CD4-positive, alpha-beta T cell (primary cell): ENCODE measurements at regions of chr17 and their contacts with region 1.

Region 1: DNA sequence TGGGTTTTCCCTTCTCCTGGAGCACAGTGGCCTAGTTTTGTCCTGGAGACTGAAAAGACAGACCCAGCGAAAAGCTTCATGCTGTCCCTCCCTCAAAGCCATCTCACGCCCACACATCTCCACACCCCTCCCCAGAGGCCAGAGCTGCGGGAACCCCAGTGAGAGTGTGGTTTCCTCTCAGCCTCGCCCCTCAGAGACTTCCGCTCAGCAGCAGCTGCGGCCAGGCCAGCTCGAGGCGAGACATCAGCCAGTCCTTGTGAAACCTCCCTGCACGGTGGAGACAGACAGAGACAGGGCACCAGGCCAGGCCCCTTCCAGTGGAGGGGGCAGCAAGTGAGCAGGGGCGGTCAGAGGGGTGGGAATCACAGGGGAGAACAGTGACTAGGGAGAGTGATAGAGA is 77.0 kb upstream of the TNRC6C start:
- DNase-seq: peak; percentile 44 to 91 (median 66)
- ATAC-seq: peak; percentile 14
- H3K4me3 ChIP-seq: peak overlapping the region; percentile 50
- H3K4me3 Mint-ChIP-seq: peak overlapping the region; percentile 87
- H3K27ac ChIP-seq: peak overlapping the region; percentile 93 to 99
- H3K27ac Mint-ChIP-seq: peak overlapping the region; percentile 97
- H3K4me1 ChIP-seq: peaks cover 91% of the 10 kb centered on the region
- H3K4me1 Mint-ChIP-seq: peaks cover 87% of the 10 kb centered on the region
- H3K27me3 ChIP-seq: no peaks in the 10 kb centered on the region
- H3K27me3 Mint-ChIP-seq: no peaks in the 10 kb centered on the region
- CTCF ChIP-seq: no peak

Region 2: GRCh38 chr17:77528516-77529327 is 352.8 kb before region 1 on chr17:
- CTCF ChIA-PET with region 1: no interaction called
- POLR2A ChIA-PET with region 1: no interaction called
- intact Hi-C with region 1: no loop called
- DNase-seq: peak in 7 of 14 experiments; percentile 4 to 46 (median 18)
- ATAC-seq: peak; percentile 65
- H3K4me3 ChIP-seq: no peak overlapping the region
- H3K4me3 Mint-ChIP-seq: no peak overlapping the region
- H3K27ac ChIP-seq: no peak overlapping the region
- H3K27ac Mint-ChIP-seq: no peak overlapping the region
- H3K4me1 ChIP-seq: peaks cover 11% of the 10 kb centered on the region
- H3K4me1 Mint-ChIP-seq: peaks cover 13% of the 10 kb centered on the region
- H3K27me3 ChIP-seq: peaks cover 18 to 20% of the 10 kb centered on the region in 2 experiments
- H3K27me3 Mint-ChIP-seq: peaks cover 16% of the 10 kb centered on the region
- CTCF ChIP-seq: no peak

Region 3: GRCh38 chr17:77666881-77667395 is 214.6 kb before region 1 on chr17:
- CTCF ChIA-PET with region 1: no interaction called
- POLR2A ChIA-PET with region 1: interaction called, 15 read pairs
- intact Hi-C with region 1: loop called in 1 of 2 experiments (anchors 5 kb)
- DNase-seq: peak; percentile 41 to 92 (median 58)
- ATAC-seq: peak; percentile 91
- H3K4me3 ChIP-seq: peak overlapping the region; percentile 58
- H3K4me3 Mint-ChIP-seq: peak overlapping the region; percentile 82
- H3K27ac ChIP-seq: peak overlapping the region; percentile 66 to 72
- H3K27ac Mint-ChIP-seq: peak overlapping the region; percentile 93
- H3K4me1 ChIP-seq: peaks cover 24% of the 10 kb centered on the region
- H3K4me1 Mint-ChIP-seq: peaks cover 53% of the 10 kb centered on the region
- H3K27me3 ChIP-seq: no peaks in the 10 kb centered on the region
- H3K27me3 Mint-ChIP-seq: no peaks in the 10 kb centered on the region
- CTCF ChIP-seq: no peak

Region 4: DNA sequence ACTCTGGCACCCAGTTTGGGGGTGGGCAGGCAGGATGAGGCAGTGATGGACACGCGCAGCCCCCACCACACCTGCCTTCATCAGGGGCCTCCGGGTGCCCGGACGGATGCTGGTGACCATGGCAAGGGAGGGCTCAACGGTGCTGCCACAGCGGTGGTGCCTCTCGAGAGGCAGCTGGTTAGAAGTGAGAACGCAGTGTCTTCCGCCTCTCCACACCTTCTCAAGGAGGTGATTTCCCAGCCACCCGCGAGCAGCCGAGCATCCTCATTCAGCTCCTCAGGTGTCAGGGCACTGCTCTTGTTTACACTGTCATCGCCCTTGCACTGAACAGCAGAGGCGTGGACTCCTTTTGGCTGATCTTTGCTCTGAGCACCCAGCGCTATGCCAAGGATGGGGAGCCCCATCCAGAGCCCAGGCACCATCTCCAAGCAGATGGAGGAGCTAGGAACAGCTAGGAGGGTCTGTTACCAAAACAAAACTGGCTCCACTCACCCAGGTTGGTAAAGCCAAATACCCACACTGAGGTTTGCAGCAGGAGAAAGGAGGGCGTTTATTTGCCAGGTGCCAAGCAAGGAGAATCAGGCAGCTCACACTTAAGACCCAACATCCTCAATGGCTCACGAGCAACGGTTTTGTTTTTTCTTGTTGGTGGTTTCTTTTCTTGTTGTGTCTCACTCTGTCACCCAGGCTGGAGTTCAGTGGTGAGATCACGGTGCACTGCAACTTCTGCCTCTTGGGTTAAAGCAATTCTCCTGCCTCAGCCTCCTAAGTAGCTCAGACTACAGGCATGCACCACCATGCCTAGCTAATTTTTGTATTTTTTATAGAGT is 97.3 kb before region 1 on chr17:
- CTCF ChIA-PET with region 1: no interaction called
- POLR2A ChIA-PET with region 1: interaction called, 13 read pairs
- intact Hi-C with region 1: no loop called
- DNase-seq: peak; percentile 51 to 92 (median 64)
- ATAC-seq: peak; percentile 93
- H3K4me3 ChIP-seq: peak overlapping the region; percentile 16
- H3K4me3 Mint-ChIP-seq: peak overlapping the region; percentile 2
- H3K27ac ChIP-seq: peak overlapping the region; percentile 64 to 77
- H3K27ac Mint-ChIP-seq: peak overlapping the region; percentile 96
- H3K4me1 ChIP-seq: peaks cover 28% of the 10 kb centered on the region
- H3K4me1 Mint-ChIP-seq: peaks cover 14% of the 10 kb centered on the region
- H3K27me3 ChIP-seq: no peaks in the 10 kb centered on the region
- H3K27me3 Mint-ChIP-seq: no peaks in the 10 kb centered on the region
- CTCF ChIP-seq: no peak

Region 5: DNA sequence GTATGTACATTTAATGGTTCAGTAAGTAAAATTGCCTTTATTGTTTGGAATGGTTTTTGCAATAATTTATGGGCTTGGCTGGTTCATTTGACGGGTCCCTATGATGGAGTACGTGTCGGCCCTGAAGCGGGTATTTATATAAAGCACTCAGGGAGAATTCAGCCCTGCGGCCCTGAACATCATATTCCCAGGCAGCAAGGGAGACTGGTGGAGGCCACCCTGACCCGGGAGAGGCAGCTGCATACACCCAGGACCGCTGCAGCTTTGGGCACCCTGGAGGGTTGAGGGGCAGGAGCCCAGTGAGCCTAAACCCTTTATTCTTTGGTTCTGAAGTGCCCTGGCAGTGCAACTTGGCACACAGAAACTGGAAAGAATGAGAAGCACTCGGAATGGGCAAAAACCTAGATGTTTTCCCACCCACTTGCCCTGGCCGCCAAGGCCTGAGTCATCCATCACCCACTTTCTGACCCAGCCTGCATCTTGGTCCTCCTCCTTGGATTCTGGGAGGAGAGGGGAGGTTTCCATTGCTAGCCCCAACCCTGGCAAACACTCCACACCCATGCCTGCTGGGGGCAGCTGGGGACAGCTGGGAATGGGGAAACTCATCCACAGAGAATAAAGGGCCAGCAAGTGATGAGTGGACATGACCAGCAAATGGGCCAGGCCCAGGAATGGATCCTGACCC is 85.2 kb before region 1 on chr17:
- CTCF ChIA-PET with region 1: no interaction called
- POLR2A ChIA-PET with region 1: no interaction called
- intact Hi-C with region 1: no loop called
- DNase-seq: no peak
- ATAC-seq: no peak
- H3K4me3 ChIP-seq: no peak overlapping the region
- H3K4me3 Mint-ChIP-seq: no peak overlapping the region
- H3K27ac ChIP-seq: no peak overlapping the region
- H3K27ac Mint-ChIP-seq: no peak overlapping the region
- H3K4me1 ChIP-seq: peaks cover 6% of the 10 kb centered on the region
- H3K4me1 Mint-ChIP-seq: no peaks in the 10 kb centered on the region
- H3K27me3 ChIP-seq: no peaks in the 10 kb centered on the region
- H3K27me3 Mint-ChIP-seq: peaks cover 5% of the 10 kb centered on the region
- CTCF ChIP-seq: no peak

Region 6: GRCh38 chr17:77834170-77835115 is 47.1 kb before region 1 on chr17:
- CTCF ChIA-PET with region 1: no interaction called
- POLR2A ChIA-PET with region 1: no interaction called
- intact Hi-C with region 1: loop called in 1 of 2 experiments (anchors 10 kb)
- DNase-seq: peak in 13 of 14 experiments; percentile 29 to 81 (median 58)
- ATAC-seq: peak; percentile 90
- H3K4me3 ChIP-seq: no peak overlapping the region
- H3K4me3 Mint-ChIP-seq: no peak overlapping the region
- H3K27ac ChIP-seq: no peak overlapping the region
- H3K27ac Mint-ChIP-seq: no peak overlapping the region
- H3K4me1 ChIP-seq: peaks cover 27% of the 10 kb centered on the region
- H3K4me1 Mint-ChIP-seq: peaks cover 20% of the 10 kb centered on the region
- H3K27me3 ChIP-seq: no peaks in the 10 kb centered on the region
- H3K27me3 Mint-ChIP-seq: peaks cover 4% of the 10 kb centered on the region
- CTCF ChIP-seq: no peak

Region 7: GRCh38 chr17:77842528-77843147 is 38.9 kb before region 1 on chr17:
- CTCF ChIA-PET with region 1: no interaction called
- POLR2A ChIA-PET with region 1: interaction called, 16 read pairs
- intact Hi-C with region 1: loop called (anchors 1 to 10 kb)
- DNase-seq: peak in 3 of 14 experiments; percentile 25 to 66 (median 54)
- ATAC-seq: no peak
- H3K4me3 ChIP-seq: no peak overlapping the region
- H3K4me3 Mint-ChIP-seq: no peak overlapping the region
- H3K27ac ChIP-seq: no peak overlapping the region
- H3K27ac Mint-ChIP-seq: peak overlapping the region; percentile 92
- H3K4me1 ChIP-seq: peaks cover 61% of the 10 kb centered on the region
- H3K4me1 Mint-ChIP-seq: peaks cover 54% of the 10 kb centered on the region
- H3K27me3 ChIP-seq: no peaks in the 10 kb centered on the region
- H3K27me3 Mint-ChIP-seq: no peaks in the 10 kb centered on the region
- CTCF ChIP-seq: no peak

Region 8: GRCh38 chr17:77852666-77853207 is 28.8 kb before region 1 on chr17:
- CTCF ChIA-PET with region 1: no interaction called
- POLR2A ChIA-PET with region 1: no interaction called
- intact Hi-C with region 1: no loop called
- DNase-seq: peak in 1 of 14 experiments; percentile 7
- ATAC-seq: no peak
- H3K4me3 ChIP-seq: no peak overlapping the region
- H3K4me3 Mint-ChIP-seq: no peak overlapping the region
- H3K27ac ChIP-seq: no peak overlapping the region
- H3K27ac Mint-ChIP-seq: no peak overlapping the region
- H3K4me1 ChIP-seq: peaks cover 27% of the 10 kb centered on the region
- H3K4me1 Mint-ChIP-seq: no peaks in the 10 kb centered on the region
- H3K27me3 ChIP-seq: no peaks in the 10 kb centered on the region
- H3K27me3 Mint-ChIP-seq: no peaks in the 10 kb centered on the region
- CTCF ChIP-seq: no peak

Region 9: GRCh38 chr17:77924757-77925336 is 43.3 kb after region 1 on chr17:
- CTCF ChIA-PET with region 1: no interaction called
- POLR2A ChIA-PET with region 1: no interaction called
- intact Hi-C with region 1: no loop called
- DNase-seq: no peak
- ATAC-seq: no peak
- H3K4me3 ChIP-seq: no peak overlapping the region
- H3K4me3 Mint-ChIP-seq: no peak overlapping the region
- H3K27ac ChIP-seq: no peak overlapping the region
- H3K27ac Mint-ChIP-seq: no peak overlapping the region
- H3K4me1 ChIP-seq: peaks cover 18% of the 10 kb centered on the region
- H3K4me1 Mint-ChIP-seq: peaks cover 30% of the 10 kb centered on the region
- H3K27me3 ChIP-seq: no peaks in the 10 kb centered on the region
- H3K27me3 Mint-ChIP-seq: peaks cover 1% of the 10 kb centered on the region
- CTCF ChIP-seq: no peak

Region 10: GRCh38 chr17:77963441-77963840 is 81.9 kb after region 1 on chr17:
- CTCF ChIA-PET with region 1: no interaction called
- POLR2A ChIA-PET with region 1: interaction called, 120 read pairs
- intact Hi-C with region 1: loop called (anchors 1 to 2 kb)
- DNase-seq: peak; percentile 30 to 85 (median 45)
- ATAC-seq: peak; percentile 62
- H3K4me3 ChIP-seq: peak overlapping the region; percentile 0
- H3K4me3 Mint-ChIP-seq: peak overlapping the region; percentile 87
- H3K27ac ChIP-seq: no peak overlapping the region
- H3K27ac Mint-ChIP-seq: peak overlapping the region; percentile 76
- H3K4me1 ChIP-seq: peaks cover 56% of the 10 kb centered on the region
- H3K4me1 Mint-ChIP-seq: peaks cover 80% of the 10 kb centered on the region
- H3K27me3 ChIP-seq: no peaks in the 10 kb centered on the region
- H3K27me3 Mint-ChIP-seq: no peaks in the 10 kb centered on the region
- CTCF ChIP-seq: no peak